ENCODE measurements at regions of chr7 and their contacts with region 1.

Region 1: GRCh38 chr7:24825931-24826661 is 68.8 kb upstream of the GSDME start:
- DNase-seq: no peak
- H3K4me3 ChIP-seq: no peak overlapping the region
- H3K27me3 ChIP-seq: no peaks in the 10 kb centered on the region
- CTCF ChIP-seq: no peak

Region 2: GRCh38 chr7:24979863-24980533 is 153.9 kb after region 1 on chr7 and contains the start of gene OSBPL3:
- CTCF ChIA-PET with region 1: interaction called, 46 read pairs
- POLR2A ChIA-PET with region 1: no interaction called
- DNase-seq: peak; percentile 71
- H3K4me3 ChIP-seq: peak within 1 kb of the TSS; percentile 60
- H3K27me3 ChIP-seq: no peaks in the 10 kb centered on the region
- CTCF ChIP-seq: no peak
- polyA plus RNA-seq, gene OSBPL3: 26.5 and 27.1 TPM in 2 replicates

Measured in BJ (cell line).